ENCODE measurements at regions of chr2 and their contacts with region 1.

Region 1: GRCh38 chr2:166127217-166128155 is at the start of gene SCN1A:
- DNase-seq: peak; percentile 81
- ATAC-seq: peak; percentile 74
- H3K4me3 ChIP-seq: no peak within 1 kb of the TSS
- H3K27ac ChIP-seq: no peak within 1 kb of the TSS
- H3K4me1 ChIP-seq: no peaks in the 10 kb centered on the region
- H3K27me3 ChIP-seq: peaks cover 79% of the 10 kb centered on the region
- CTCF ChIP-seq: peak; percentile 94
- total RNA-seq, gene SCN1A: 0.04 TPM in 1 of 2 replicates, not detected in the other

Region 2: DNA sequence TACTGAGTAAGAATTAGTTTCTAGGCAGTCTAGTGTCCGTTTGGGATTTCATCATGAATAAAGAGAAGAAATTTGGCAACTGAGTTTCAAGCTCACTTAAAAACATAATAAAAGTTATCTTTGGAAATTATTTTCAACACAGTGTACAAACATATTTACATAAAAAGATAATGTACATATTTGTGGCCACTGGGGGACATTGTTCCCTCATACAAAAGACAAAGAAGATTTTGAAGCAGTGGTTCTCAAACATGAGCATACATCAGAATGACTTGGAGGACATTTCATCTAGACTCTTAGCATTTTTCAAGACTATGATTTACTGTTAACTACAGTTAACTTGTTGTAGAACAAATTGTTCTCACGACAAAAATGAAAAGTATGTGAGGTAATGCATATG is 158.3 kb before region 1 on chr2:
- CTCF ChIA-PET with region 1: interaction called, 8 read pairs
- POLR2A ChIA-PET with region 1: no interaction called
- intact Hi-C with region 1: loop called (anchors 1 kb)
- DNase-seq: no peak
- ATAC-seq: no peak
- H3K4me3 ChIP-seq: no peak overlapping the region
- H3K27ac ChIP-seq: no peak overlapping the region
- H3K4me1 ChIP-seq: no peaks in the 10 kb centered on the region
- H3K27me3 ChIP-seq: peaks cover 22% of the 10 kb centered on the region
- CTCF ChIP-seq: peak; percentile 33; the same call in 1 of the 2 replicates

Region 3: GRCh38 chr2:166057370-166058164 is 69.9 kb before region 1 on chr2:
- CTCF ChIA-PET with region 1: interaction called, 8 read pairs
- POLR2A ChIA-PET with region 1: no interaction called
- intact Hi-C with region 1: loop called (anchors 1 kb)
- DNase-seq: peak; percentile 68
- ATAC-seq: no peak
- H3K4me3 ChIP-seq: no peak overlapping the region
- H3K27ac ChIP-seq: no peak overlapping the region
- H3K4me1 ChIP-seq: peaks cover 5% of the 10 kb centered on the region
- H3K27me3 ChIP-seq: peaks cover 39% of the 10 kb centered on the region
- CTCF ChIP-seq: peak; percentile 94

Region 4: DNA sequence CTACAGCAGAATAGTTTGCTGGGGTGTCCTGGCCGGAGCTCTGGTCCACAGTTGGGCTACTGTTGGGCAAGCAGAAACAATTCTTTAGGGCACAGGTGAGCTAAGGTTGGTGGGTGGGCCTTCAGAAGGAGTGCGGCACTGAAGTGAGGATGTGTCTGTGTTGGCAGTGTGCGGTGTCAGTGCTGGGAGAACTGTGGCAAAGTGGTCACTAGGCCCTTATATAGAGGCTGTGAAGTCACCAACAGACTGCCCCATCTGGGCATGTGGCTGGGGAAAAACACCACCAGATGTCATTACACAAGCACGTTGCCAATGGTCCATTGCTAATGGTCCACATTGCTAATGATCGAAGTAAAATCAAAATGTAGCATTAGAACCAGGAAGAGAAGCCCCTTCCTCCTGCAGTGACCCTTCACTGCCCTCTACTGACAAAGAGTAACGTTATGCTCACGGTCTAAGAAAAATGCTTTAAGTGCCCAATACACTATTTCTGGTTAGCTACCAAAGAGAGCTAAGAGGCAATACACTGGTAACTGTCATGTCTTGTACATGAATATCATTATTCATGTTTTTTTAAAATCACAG is 21.0 kb before region 1 on chr2:
- CTCF ChIA-PET with region 1: no interaction called
- POLR2A ChIA-PET with region 1: no interaction called
- intact Hi-C with region 1: no loop called
- DNase-seq: peak; percentile 37
- ATAC-seq: 0 out of 2 replicates have a peak, but pooled peaks have one; percentile 22
- H3K4me3 ChIP-seq: no peak overlapping the region
- H3K27ac ChIP-seq: no peak overlapping the region
- H3K4me1 ChIP-seq: no peaks in the 10 kb centered on the region
- H3K27me3 ChIP-seq: no peaks in the 10 kb centered on the region
- CTCF ChIP-seq: peak; percentile 63